Activated CD4-positive, alpha-beta T cell treated with anti-CD3 and anti-CD28 coated beads, Interleukin-2, amount 10 ng/mL, durations not matched to agents 24 days and 14 days (primary cell): ENCODE measurements at regions of chr10 and their contacts with region 1.

Region 1: GRCh38 chr10:17233286-17233991 is 5.4 kb downstream of the VIM start:
- DNase-seq: no peak
- H3K4me3 Mint-ChIP-seq: peak overlapping the region; percentile 9
- H3K27ac Mint-ChIP-seq: no peak overlapping the region
- H3K4me1 Mint-ChIP-seq: peaks cover 39% of the 10 kb centered on the region
- H3K27me3 Mint-ChIP-seq: no peaks in the 10 kb centered on the region

Region 2: DNA sequence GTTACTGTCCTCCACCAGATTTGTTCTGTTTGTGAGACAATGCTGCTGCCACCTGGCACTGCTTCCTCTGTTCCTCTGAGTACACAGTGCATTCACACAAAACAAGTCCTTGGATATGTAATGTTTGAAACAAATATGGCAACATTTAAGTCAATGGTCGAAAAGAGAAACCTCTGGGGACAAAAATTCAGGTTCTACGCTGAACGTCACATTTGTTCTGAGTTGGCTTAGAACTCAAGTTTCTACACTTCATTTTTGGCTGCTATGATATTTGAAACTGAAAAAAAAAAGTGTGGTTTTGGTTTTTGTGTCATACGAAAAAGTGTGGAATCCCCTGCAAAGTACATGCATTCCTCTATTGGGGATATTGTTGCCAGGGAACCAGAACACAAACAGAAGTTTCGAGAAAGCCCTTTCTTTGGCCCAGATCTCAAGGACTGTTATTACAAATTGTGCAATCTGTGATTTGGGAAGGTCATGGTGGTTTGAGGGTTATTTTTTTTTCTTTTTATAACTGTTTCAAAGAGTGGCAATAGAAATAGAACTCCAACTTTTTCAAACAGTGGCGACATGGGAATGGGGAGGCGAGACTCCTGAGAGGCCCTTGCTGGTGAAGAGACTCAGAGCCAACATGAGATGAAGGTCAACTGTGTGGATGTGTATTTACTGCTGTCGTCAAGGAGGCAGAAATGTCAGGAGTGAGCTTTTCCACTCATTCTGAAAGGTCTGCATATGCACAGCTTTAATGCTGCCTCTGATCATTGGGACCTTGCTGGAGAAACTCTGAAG is 231.3 kb before region 1 on chr10:
- intact Hi-C with region 1: loop called (anchors 1 kb)
- DNase-seq: peak; percentile 89
- H3K4me3 Mint-ChIP-seq: peak overlapping the region; percentile 71
- H3K27ac Mint-ChIP-seq: peak overlapping the region; percentile 95
- H3K4me1 Mint-ChIP-seq: peaks cover 33% of the 10 kb centered on the region
- H3K27me3 Mint-ChIP-seq: peaks cover 57% of the 10 kb centered on the region

Region 3: GRCh38 chr10:17029581-17030271 is 203.7 kb before region 1 on chr10:
- intact Hi-C with region 1: loop called (anchors 1 kb)
- DNase-seq: peak; percentile 92
- H3K4me3 Mint-ChIP-seq: peak overlapping the region; percentile 80
- H3K27ac Mint-ChIP-seq: peak overlapping the region; percentile 90
- H3K4me1 Mint-ChIP-seq: peaks cover 63% of the 10 kb centered on the region
- H3K27me3 Mint-ChIP-seq: peaks cover 2% of the 10 kb centered on the region

Region 4: GRCh38 chr10:17144757-17145156 is 88.7 kb before region 1 on chr10:
- intact Hi-C with region 1: loop called (anchors 1 kb)
- DNase-seq: peak; percentile 85
- H3K4me3 Mint-ChIP-seq: no peak overlapping the region
- H3K27ac Mint-ChIP-seq: peak overlapping the region; percentile 61
- H3K4me1 Mint-ChIP-seq: peaks cover 23% of the 10 kb centered on the region
- H3K27me3 Mint-ChIP-seq: peaks cover 5% of the 10 kb centered on the region

Region 5: GRCh38 chr10:17200912-17201793 is 32.3 kb before region 1 on chr10 and contains the start of gene TRDMT1:
- intact Hi-C with region 1: loop called (anchors 1 kb)
- DNase-seq: peak; percentile 96
- H3K4me3 Mint-ChIP-seq: peak within 1 kb of the TSS; percentile 95
- H3K27ac Mint-ChIP-seq: peak within 1 kb of the TSS; percentile 92
- H3K4me1 Mint-ChIP-seq: peaks cover 33% of the 10 kb centered on the region
- H3K27me3 Mint-ChIP-seq: no peaks in the 10 kb centered on the region
- total RNA-seq, gene TRDMT1: 3.9 and 5.6 TPM in 2 replicates

Region 6: GRCh38 chr10:17216217-17216900 is 17.1 kb before region 1 on chr10:
- intact Hi-C with region 1: loop called (anchors 1 kb)
- DNase-seq: peak; percentile 86
- H3K4me3 Mint-ChIP-seq: peak overlapping the region; percentile 8
- H3K27ac Mint-ChIP-seq: peak overlapping the region; percentile 88
- H3K4me1 Mint-ChIP-seq: peaks cover 32% of the 10 kb centered on the region
- H3K27me3 Mint-ChIP-seq: no peaks in the 10 kb centered on the region

Region 7: GRCh38 chr10:17257466-17258321 is 24.3 kb after region 1 on chr10:
- intact Hi-C with region 1: loop called (anchors 2 kb)
- DNase-seq: peak; percentile 89
- H3K4me3 Mint-ChIP-seq: peak overlapping the region; percentile 50
- H3K27ac Mint-ChIP-seq: no peak overlapping the region
- H3K4me1 Mint-ChIP-seq: peaks cover 11% of the 10 kb centered on the region
- H3K27me3 Mint-ChIP-seq: peaks cover 6% of the 10 kb centered on the region